ENCODE measurements at regions of chr3 and their contacts with region 1.

Region 1: GRCh38 chr3:29764603-29765254 is 483.9 kb downstream of the RBMS3 start:
- ATAC-seq: peak in 4 of 8 experiments; percentile 31 to 69 (median 50)
- H3K4me3 ChIP-seq: no peak overlapping the region
- H3K27ac ChIP-seq: no peak overlapping the region
- H3K4me1 ChIP-seq: peaks cover 7 to 8% of the 10 kb centered on the region in 2 donors

Region 2: DNA sequence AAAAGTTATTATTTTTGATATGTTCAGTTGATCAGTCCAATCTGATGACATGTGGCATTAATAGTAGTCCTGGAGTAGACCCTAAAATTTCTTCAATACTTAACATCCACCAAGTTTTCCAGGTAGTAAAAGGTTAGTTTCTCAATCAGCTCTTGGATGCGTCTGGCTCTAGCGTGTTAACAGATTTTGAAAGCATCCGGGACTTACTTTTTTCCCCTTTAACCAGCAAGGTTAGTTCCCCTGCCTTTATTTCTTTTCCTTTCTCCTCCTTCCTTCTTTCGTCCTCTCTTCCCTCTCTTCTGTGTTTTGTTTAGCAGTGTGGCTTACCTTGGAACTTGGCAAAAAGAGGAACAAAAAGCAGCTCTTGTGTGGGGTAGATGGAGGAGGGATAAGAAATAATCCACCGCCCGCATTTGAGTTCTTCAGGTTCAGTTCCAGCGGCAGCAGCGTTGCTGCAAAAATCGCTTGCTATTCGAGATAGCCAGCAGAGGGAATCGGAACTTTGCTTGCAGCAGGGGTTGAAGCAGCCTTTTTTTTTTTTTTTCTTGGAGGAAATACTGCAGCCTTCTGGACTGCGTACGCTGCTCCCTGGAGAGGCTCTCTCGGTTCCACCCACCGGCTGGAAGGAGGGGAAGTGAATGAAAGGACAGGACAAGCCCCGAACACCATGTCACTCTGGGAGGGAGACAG is 484.2 kb before region 1 on chr3 and contains the start of gene RBMS3:
- in situ Hi-C with region 1: loop called in 1 of 9 experiments (anchors 25 kb)
- ATAC-seq: peak; percentile 83 to 97 (median 96)
- H3K4me3 ChIP-seq: peak within 1 kb of the TSS; percentile 26 to 43 (median 38)
- H3K27ac ChIP-seq: peak within 1 kb of the TSS in 1 of 2 donors; percentile 68
- H3K4me1 ChIP-seq: peaks cover 4 to 21% of the 10 kb centered on the region in 2 donors
- total RNA-seq, gene RBMS3: 11.0 to 63.7 (median 16.7) TPM

Measured in motor neuron (in vitro differentiated cells).